AG04450 (cell line): ENCODE measurements at regions of chr4 and their contacts with region 1.

Region 1: GRCh38 chr4:165355900-165356300 is 22.9 kb upstream of the CPE start:
- DNase-seq: no peak
- H3K4me3 ChIP-seq: no peak overlapping the region
- H3K27ac ChIP-seq: no peak overlapping the region
- H3K27me3 ChIP-seq: no peaks in the 10 kb centered on the region
- CTCF ChIP-seq: peak; percentile 59

Region 2: DNA sequence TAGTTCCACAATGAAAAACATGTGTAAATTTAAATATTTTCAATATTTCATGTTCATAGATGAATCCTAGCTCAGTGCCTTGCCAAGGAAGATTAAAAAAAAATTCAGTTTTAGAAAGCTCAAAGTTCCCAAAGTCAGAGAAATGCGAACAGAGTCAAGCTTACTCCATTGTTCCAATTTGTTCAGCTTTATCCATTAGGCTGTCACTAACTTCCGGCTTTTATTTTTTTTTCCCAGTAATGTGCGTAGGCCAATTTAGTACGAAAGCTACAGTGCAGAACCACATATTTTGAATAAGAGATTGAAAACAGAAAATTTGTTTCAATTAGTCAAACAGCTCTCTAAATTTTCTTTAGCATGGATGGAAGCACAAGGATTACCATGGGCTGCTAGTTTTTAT is 171.7 kb before region 1 on chr4:
- CTCF ChIA-PET with region 1: interaction called, 10 read pairs
- POLR2A ChIA-PET with region 1: no interaction called
- DNase-seq: no peak
- H3K4me3 ChIP-seq: no peak overlapping the region
- H3K27ac ChIP-seq: no peak overlapping the region
- H3K27me3 ChIP-seq: no peaks in the 10 kb centered on the region
- CTCF ChIP-seq: no peak

Region 3: DNA sequence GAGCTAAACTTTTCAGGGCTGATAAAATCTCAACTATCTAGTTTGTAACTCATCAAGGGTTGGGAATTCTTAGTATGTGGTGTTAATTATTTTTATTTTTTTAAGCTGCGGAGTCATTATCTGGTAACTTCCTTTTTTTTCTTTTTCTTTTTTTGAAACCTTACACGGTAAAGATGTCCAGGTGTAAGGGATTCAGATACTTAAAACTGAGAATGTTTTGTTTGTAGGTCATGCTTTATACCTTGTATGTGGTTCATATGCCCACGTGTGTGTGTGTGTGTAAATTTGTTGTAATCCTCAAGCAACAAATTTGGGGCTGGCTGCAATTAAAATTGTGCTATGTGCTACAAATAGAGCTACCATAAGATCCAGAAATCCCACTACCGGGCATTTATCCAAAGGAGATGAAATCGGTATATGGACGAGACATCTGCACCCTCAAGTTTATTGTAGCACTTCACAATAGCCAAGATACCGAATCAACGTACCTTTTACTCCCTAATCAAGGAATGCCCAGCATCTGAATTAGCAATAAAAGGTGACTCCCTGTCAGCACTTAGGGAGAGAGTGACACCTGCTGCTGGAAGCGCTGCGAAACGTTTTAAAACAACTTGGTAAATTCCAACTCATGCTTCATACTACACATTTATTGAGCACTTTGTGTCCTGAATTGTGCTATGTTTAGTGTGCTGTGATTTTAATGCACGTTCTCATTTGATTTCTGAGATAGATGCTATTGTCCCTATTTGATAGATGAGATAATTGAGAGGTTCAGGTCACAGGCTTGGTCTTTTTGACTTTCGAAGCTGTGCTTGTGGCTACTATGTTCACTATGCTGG is 12.3 kb before region 1 on chr4:
- CTCF ChIA-PET with region 1: interaction called, 11 read pairs
- POLR2A ChIA-PET with region 1: no interaction called
- DNase-seq: no peak
- H3K4me3 ChIP-seq: no peak overlapping the region
- H3K27ac ChIP-seq: no peak overlapping the region
- H3K27me3 ChIP-seq: peaks cover 4% of the 10 kb centered on the region
- CTCF ChIP-seq: peak; percentile 48

Region 4: DNA sequence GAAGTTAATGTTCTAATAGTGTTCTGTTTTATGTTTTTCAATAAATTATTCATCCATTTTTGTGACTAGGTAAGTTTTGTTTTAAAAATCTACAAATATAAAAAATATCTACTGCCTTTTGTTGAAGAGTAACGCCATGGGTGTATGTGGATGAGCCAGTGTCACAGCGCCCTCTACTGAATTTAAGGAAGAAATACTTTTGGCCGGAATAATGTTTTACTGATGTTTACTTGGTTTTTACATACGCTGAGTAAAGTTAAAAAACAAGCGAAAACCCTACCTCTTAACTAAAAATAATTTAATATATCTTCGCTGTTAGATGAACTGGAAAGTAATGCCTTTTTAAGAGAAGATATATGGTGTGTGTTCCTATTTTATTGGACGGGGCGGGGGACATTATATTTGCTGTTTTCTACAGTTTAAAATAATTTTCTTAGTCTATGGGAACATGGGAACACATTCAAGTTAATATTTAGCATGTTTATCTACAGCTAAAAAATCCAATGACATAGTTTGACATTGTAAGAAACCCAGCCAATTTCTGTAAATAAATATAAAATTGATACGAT is 109.0 kb after region 1 on chr4:
- CTCF ChIA-PET with region 1: interaction called, 15 read pairs
- POLR2A ChIA-PET with region 1: no interaction called
- DNase-seq: peak; percentile 11
- H3K4me3 ChIP-seq: no peak overlapping the region
- H3K27ac ChIP-seq: no peak overlapping the region
- H3K27me3 ChIP-seq: no peaks in the 10 kb centered on the region
- CTCF ChIP-seq: peak; percentile 80